ENCODE measurements at regions of chr16 and their contacts with region 1.

Region 1: DNA sequence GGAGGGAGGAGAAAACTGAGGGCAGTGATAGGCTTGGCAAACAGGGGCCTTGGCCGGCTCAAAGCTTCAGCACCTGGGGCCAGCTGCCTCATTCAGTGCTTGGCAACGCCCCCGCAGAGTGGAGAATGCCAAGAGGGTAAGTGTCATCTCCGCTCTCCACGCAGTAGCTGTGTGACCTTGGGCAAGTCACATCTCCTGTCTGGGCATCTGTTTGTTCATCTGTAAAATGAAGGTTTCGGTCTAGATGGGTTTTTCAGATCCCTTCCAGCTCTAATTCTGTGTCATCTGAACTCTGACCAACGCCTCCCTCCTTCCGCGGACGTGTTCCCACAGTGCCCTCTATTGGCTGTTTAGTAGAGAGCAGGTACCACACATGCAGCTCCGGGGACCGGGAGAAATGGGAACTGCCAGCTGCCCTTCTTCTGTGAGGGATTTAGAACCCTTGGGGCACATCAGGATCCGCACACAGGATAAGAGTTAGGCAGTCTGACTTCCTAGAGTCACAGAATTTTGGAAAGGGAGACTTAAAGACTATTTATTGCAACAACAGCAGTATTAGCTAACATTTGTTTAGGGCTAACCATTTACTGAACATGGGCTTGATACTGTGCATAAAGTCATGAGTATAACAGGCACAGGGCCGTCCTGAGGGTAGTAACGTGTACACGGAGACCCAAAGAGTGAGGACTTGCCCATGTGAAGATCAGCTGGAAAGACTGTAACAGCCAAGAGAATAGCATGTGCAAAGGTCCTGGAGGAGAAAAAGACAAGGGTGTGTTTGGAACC is 26.8 kb downstream of the GP2 start:
- DNase-seq: peak; percentile 49
- H3K4me3 Mint-ChIP-seq: no peak overlapping the region
- H3K27ac Mint-ChIP-seq: no peak overlapping the region
- H3K4me1 Mint-ChIP-seq: no peaks in the 10 kb centered on the region
- H3K27me3 Mint-ChIP-seq: no peaks in the 10 kb centered on the region

Region 2: DNA sequence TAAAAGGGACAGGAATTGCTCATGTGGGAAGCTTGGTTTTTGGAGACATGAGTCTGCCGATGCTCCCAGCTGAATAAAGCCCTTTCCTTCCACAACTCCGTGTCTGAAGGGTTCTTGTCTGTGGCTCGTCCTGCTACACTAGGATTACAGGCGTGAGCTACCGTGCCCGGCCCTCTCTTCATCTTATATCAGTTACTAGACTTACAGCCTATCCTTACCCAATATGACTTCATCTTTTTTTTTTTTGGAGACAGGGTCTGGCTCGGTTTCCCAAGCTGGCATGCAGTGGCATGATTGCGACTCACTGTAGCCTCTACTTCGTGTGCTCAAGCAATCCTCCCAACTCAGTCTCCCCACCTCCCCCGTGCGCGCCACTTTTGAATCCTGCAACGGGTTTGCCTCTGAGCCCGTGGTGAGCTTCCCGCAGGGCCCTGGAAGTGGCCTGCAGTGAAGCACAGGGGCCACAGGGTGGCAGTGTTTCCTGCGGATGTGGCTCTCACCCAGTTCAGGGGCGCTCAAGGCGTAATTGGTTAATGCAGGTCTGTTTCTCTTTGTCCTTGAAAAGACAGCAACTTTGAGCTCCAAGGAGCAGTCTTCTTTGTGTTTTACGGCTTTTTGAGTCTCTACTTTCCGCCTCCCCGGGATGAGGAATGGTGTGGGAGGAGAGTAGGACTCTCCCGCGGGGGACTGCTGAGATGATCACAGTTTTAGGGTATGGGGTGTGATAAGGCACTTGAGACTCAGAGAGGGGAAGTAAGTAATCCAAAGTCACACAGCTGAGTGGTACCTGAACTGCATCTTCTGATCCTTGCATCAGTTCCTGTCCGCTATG is 393.1 kb before region 1 on chr16:
- CTCF ChIA-PET with region 1: interaction called, 15 read pairs
- POLR2A ChIA-PET with region 1: no interaction called
- DNase-seq: peak; percentile 78
- H3K4me3 Mint-ChIP-seq: peak overlapping the region; percentile 30
- H3K27ac Mint-ChIP-seq: no peak overlapping the region
- H3K4me1 Mint-ChIP-seq: peaks cover 10% of the 10 kb centered on the region
- H3K27me3 Mint-ChIP-seq: no peaks in the 10 kb centered on the region